ENCODE measurements at regions of chr10 and their contacts with region 1.

Region 1: GRCh38 chr10:52779541-52780390 is 7.2 kb upstream of the MBL2 start:
- DNase-seq: peak; percentile 73 to 98
- H3K4me3 ChIP-seq: no peak overlapping the region
- H3K27ac ChIP-seq: no peak overlapping the region
- H3K4me1 ChIP-seq: no peaks in the 10 kb centered on the region; a peak in 1 of 7 replicates
- H3K27me3 ChIP-seq: no peaks in the 10 kb centered on the region
- CTCF ChIP-seq: peak; percentile 89 to 97 (median 95)
- EP300 ChIP-seq: no peak
- POLR2A ChIP-seq: no peak
- RAD21 ChIP-seq: peak; percentile 97

Region 2: DNA sequence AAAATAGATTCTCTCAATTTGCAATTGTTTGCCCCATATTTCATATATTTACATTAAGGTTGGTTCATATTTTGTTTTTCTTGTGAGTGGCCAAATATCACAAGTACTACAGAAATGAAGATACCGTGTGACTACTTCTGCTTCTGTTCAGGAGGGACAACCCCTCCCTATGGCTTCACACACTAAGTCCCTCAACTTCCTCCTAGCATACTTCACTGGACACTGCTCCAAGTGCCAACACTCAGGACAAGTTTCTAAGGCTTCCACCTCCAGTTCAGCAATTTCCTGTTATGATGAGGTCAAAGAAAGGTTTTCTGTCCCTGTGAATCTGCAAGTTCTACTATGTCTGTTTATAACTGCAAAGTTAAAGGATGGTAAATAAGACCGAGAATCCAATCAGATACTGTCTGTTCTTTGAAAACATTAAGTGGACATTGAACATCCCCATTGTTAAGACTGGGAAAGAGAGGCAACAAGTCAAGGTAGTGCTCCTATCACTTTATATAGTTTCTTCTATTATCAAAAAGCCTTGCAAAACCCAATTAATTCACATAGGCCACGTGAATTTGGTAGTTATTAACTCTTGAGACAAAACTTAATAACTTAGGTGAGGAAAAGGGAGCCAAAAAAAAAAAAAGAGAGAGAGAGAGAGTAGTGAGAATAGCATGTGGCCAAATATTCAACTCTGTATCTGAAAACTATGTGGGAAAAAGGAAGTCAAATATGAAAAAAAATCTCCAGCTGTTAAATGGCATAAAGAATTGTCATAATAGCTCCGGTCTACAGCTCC is 547.0 kb before region 1 on chr10:
- CTCF ChIA-PET with region 1: no interaction called
- POLR2A ChIA-PET with region 1: no interaction called
- DNase-seq: no peak
- H3K4me3 ChIP-seq: peak overlapping the region in 3 of 4 experiments; percentile 26 to 43 (median 35); a peak in 4 of 8 replicates
- H3K27ac ChIP-seq: no peak overlapping the region
- H3K4me1 ChIP-seq: peaks cover 0 to 2% (median under 1%) of the 10 kb centered on the region in 4 experiments; a peak in 2 of 7 replicates
- H3K27me3 ChIP-seq: no peaks in the 10 kb centered on the region
- CTCF ChIP-seq: no peak
- EP300 ChIP-seq: no peak
- POLR2A ChIP-seq: no peak
- RAD21 ChIP-seq: no peak

Region 3: DNA sequence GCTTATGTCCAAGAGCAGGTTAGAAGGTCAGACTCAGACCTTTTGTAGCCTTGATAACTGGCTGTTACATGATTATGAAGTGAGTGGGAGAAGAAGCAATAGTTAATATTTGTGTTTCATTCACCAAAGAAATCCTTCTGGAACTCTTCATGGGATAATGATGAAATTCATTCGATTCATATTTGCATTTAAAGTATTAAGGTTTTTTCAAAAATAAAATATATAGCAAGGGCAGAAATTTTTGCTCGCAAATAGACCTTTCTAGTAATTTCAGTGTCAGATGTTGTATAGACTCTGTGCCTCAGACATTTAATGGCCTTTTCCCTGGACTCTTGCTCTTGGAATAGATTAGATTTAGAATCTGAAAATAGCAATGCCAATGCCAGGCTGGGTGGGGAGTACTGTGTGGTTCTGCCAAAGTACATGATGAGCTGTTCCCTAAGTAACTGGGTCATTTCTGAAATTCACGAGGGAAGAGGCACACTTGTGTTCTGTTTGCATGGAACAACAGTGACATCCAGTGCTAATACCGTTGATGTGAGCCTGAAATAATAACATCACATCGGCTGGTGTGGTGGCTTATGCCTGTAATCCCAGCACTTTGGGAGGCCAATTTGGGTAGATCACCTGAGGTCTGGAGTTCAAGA is 126.4 kb before region 1 on chr10:
- CTCF ChIA-PET with region 1: interaction called, 25 read pairs
- POLR2A ChIA-PET with region 1: no interaction called
- DNase-seq: no peak
- H3K4me3 ChIP-seq: no peak overlapping the region
- H3K27ac ChIP-seq: no peak overlapping the region
- H3K4me1 ChIP-seq: no peaks in the 10 kb centered on the region
- H3K27me3 ChIP-seq: no peaks in the 10 kb centered on the region
- CTCF ChIP-seq: no peak
- EP300 ChIP-seq: no peak
- POLR2A ChIP-seq: no peak
- RAD21 ChIP-seq: peak in 1 of 2 experiments; percentile 33; a peak in 2 of 4 replicates

Region 4: DNA sequence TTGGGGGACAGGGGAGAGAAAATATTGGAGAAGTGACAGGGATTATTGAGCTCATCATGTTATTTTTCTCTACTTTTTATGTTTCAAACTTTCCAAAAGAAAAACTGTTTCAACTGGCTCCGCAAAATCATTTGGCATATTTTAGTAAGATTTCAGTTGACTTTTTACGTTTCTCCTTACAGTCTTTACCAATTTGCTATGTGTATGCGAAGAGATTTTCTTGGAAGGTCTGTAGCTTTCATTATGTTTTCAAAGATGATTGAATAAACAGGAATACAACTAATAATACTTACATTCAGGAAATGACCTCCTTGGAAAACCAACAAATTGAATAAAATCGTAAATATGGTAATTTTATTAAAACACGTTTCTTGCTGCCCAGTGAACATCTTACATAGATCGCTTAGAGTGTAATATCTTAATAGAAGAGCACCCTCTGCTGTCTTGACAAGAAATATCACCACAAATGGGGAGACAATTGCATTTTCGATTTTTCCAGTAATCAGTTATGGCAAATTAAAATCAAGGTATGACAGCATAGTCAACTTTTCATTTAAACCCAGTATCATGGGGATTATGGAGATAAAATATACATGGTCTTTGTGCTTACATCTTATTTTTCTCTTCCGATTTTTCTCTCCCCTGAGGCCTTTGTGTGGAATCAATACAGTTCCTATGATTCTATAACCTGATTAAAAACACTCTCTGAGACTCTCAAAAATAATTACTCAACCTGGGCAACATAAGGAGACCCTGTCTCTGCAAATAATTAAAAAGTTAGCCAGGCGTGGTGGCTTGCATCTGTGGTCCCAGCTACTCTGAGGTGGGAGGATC is 50.3 kb before region 1 on chr10:
- CTCF ChIA-PET with region 1: interaction called, 10 read pairs
- POLR2A ChIA-PET with region 1: no interaction called
- DNase-seq: no peak
- H3K4me3 ChIP-seq: no peak overlapping the region
- H3K27ac ChIP-seq: no peak overlapping the region
- H3K4me1 ChIP-seq: no peaks in the 10 kb centered on the region
- H3K27me3 ChIP-seq: no peaks in the 10 kb centered on the region
- CTCF ChIP-seq: peak in 2 of 3 experiments; percentile 28 to 38; a peak in 2 of 4 replicates
- EP300 ChIP-seq: no peak
- POLR2A ChIP-seq: no peak
- RAD21 ChIP-seq: peak; percentile 67 to 69

Region 5: DNA sequence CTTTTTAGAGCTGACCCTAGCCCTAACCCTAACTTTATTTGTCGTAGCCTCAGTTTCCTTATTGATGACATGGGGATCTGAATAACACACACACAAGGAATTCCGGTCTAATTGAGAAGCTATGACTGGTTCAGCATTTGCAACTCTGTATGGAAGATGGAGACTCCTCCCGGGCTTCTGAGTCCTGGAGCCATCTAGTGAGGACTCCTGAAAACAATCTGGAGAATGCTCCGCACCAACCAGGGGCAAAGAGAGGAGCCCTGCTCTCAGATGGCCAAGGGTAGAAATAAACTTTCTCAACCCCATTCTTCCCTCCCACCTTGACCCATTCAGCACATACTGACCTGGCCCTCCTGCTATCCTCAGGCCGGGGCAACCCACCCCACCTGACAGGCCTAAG is 33.6 kb before region 1 on chr10:
- CTCF ChIA-PET with region 1: interaction called, 127 read pairs
- POLR2A ChIA-PET with region 1: no interaction called
- DNase-seq: no peak
- H3K4me3 ChIP-seq: no peak overlapping the region
- H3K27ac ChIP-seq: no peak overlapping the region
- H3K4me1 ChIP-seq: no peaks in the 10 kb centered on the region
- H3K27me3 ChIP-seq: no peaks in the 10 kb centered on the region
- CTCF ChIP-seq: no peak
- EP300 ChIP-seq: no peak
- POLR2A ChIP-seq: no peak
- RAD21 ChIP-seq: no peak

Measured in H1 (cell line).